ENCODE measurements at regions of chr5 and their contacts with region 1.

Region 1: GRCh38 chr5:80487829-80488721 is at the start of gene FAM151B:
- DNase-seq: peak; percentile 90 to 94 (median 92)
- H3K4me3 ChIP-seq: peak within 1 kb of the TSS in 3 of 4 donors; percentile 36 to 74 (median 41)
- H3K27ac ChIP-seq: peak within 1 kb of the TSS; percentile 62 to 87 (median 81)
- H3K4me1 ChIP-seq: peaks cover 14 to 16% of the 10 kb centered on the region in 2 donors
- H3K27me3 ChIP-seq: no peaks in the 10 kb centered on the region
- CTCF ChIP-seq: peak in 3 of 6 experiments; percentile 8 to 29 (median 23)
- POLR2A ChIP-seq: peak in 1 of 2 donors; percentile 75
- total RNA-seq, gene FAM151B: 1.3 to 5.7 (median 3.6) TPM

Region 2: DNA sequence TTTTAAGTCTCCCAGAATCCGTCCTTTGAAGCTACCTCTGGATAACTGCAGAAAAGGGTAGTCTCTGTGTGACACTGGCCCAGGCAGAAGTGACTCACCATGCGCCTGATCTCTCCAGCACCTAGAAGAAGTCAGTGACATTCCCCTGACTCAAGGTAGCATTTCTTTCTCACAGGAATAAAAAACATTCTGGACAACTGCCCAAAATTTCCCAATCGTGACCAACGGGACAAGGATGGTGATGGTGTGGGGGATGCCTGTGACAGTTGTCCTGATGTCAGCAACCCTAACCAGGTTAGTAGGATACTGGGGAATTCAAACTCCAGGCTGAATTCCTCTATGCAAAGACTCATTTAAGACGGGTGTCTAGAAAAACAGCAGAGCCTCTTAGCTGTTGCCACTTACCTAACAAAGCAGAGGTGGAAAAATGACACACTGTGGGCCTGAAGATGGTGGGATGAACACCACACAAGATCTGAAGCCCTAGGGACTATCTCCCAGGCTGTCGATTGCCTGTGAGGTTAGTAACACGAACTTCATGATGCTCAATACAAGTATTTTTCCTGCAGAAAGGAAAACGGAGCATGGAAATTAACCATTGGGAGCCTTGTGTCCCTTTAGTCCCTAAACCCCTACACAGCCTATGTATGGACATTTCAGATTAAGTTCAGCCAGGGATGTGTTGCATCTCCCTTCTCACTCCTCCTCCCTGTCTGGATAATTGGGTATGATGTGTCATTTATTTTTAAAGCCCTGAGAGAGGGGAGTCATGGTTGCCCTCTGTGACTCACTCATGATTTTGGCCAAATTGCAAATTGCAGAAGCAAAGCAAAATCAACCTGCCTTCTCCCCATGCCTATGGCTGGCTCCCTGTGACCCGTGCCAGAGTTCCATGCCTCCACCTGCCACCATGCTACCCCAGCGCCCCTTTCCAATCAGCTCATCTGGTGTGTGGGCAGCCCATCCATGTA is 415.7 kb before region 1 on chr5:
- intact Hi-C with region 1: no loop called
- DNase-seq: no peak
- H3K4me3 ChIP-seq: no peak overlapping the region
- H3K27ac ChIP-seq: no peak overlapping the region
- H3K4me1 ChIP-seq: no peaks in the 10 kb centered on the region
- H3K27me3 ChIP-seq: no peaks in the 10 kb centered on the region
- CTCF ChIP-seq: no peak
- POLR2A ChIP-seq: no peak

Region 3: GRCh38 chr5:80372780-80373179 is 115.3 kb before region 1 on chr5:
- intact Hi-C with region 1: no loop called
- DNase-seq: no peak
- H3K4me3 ChIP-seq: no peak overlapping the region
- H3K27ac ChIP-seq: no peak overlapping the region
- H3K4me1 ChIP-seq: no peaks in the 10 kb centered on the region
- H3K27me3 ChIP-seq: no peaks in the 10 kb centered on the region
- CTCF ChIP-seq: no peak
- POLR2A ChIP-seq: no peak

Region 4: DNA sequence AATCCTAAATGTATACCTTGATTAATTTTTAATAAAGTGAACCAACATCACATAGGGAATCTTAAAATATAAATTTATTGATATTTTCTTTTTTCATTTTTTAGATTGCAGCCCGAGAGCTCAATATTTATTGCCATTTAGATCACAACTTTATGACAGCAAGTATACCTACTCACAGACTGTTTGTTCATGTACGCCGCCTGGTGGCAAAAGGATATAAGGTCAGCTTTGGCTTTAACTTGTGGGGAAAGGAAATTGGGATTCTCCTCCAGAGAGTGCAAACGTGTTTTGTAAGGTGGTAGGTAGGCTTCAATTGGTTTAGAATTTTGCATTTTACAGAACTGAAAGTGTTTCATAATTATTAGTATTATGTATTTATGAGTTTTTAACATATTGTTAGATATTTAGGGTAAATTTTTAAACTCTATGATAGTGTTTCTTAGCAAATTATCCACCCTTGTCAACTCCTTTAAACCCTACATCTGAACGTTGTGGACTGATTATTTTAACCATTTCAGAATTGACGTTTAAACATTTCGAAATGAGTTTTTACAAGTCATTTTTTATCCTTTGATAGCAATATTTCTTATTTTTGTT is 184.2 kb after region 1 on chr5:
- intact Hi-C with region 1: loop called (anchors 10 kb)
- DNase-seq: peak; percentile 67 to 90 (median 77)
- H3K4me3 ChIP-seq: no peak overlapping the region
- H3K27ac ChIP-seq: no peak overlapping the region
- H3K4me1 ChIP-seq: no peaks in the 10 kb centered on the region
- H3K27me3 ChIP-seq: no peaks in the 10 kb centered on the region
- CTCF ChIP-seq: peak; percentile 69 to 90 (median 78)
- POLR2A ChIP-seq: no peak

Measured in adrenal gland (tissue), 19 donors.